PC-3 (cell line): ENCODE measurements at regions of chr14 and their contacts with region 1.

Region 1: GRCh38 chr14:89303457-89304435 is 113.3 kb downstream of the FOXN3 start:
- DNase-seq: peak; percentile 64
- ATAC-seq: peak; percentile 50
- H3K4me3 ChIP-seq: peak overlapping the region; percentile 44
- H3K27ac ChIP-seq: peak overlapping the region; percentile 93
- H3K4me1 ChIP-seq: peaks cover 38% of the 10 kb centered on the region
- H3K27me3 ChIP-seq: no peaks in the 10 kb centered on the region
- CTCF ChIP-seq: no peak

Region 2: DNA sequence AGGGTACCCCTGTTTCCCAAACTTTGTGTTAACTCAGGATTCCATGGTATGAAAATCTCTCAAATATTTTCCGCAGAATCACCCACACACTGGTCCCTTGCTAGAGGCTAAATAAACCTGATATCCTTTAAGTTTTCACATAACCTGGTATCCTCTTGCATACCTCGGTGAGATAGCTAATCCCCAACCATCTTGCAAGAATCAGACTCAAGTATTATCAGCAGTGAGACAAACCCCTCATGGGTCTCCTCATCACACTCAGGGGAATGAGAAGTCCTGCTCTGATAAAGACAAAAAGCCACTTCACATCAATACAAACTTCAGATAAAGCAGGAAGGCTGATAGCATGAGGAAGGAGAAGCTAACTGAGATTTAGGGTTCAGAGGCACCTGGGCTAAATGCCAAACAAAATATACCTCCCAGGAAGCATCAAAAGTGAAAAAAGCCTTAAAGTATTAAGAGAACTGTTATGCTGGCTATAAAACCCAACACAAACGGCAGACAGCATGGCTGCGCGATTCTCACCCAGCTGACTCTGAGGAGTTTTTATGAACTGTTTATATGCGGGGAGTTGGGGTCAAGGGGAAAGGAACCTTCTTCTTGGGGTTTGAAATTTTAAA is 16.7 kb after region 1 on chr14:
- CTCF ChIA-PET with region 1: no interaction called
- POLR2A ChIA-PET with region 1: no interaction called
- intact Hi-C with region 1: loop called (anchors 2 kb)
- DNase-seq: no peak
- ATAC-seq: no peak
- H3K4me3 ChIP-seq: no peak overlapping the region
- H3K27ac ChIP-seq: peak overlapping the region; percentile 55
- H3K4me1 ChIP-seq: peaks cover 15% of the 10 kb centered on the region; the same call in 1 of the 2 replicates
- H3K27me3 ChIP-seq: no peaks in the 10 kb centered on the region
- CTCF ChIP-seq: no peak

Region 3: DNA sequence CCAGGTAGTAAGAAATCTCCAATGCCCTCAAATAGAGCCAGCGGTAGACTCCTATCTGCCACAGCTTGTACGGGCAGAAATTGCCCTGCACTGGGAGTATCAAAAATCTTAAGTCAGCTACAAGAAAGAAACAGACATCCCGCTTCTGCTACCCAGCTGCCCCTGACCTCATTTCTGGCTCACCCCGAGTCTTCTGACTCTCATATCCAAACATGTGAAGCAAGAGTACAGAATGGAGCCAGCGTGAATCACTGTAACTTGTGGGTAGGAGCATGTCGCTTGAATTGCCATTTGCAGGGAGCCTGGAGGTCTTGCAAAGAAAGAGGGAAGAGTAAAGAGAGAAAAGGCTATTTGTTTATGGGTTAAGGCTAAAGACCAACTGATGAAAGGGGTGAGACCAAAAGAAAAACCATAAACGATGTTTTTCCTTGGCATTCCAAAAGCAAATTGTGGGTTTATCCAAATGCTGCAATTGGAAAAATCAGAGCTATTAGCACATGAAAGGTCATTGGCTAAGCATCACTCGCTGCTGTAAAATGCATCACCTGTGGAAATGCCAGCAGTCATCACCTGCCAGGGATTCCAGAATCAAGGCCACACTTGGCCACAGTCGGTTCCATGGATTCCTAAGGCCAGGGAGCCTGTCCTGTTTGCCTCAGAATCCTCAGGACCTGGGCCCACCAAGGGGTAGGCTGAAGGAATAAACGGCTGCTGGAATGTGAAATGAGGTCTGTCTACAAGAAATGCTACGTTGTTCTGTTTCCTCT is 26.7 kb after region 1 on chr14:
- CTCF ChIA-PET with region 1: no interaction called
- POLR2A ChIA-PET with region 1: interaction called, 10 read pairs
- intact Hi-C with region 1: loop called (anchors 2 kb)
- DNase-seq: no peak
- ATAC-seq: no peak
- H3K4me3 ChIP-seq: no peak overlapping the region
- H3K27ac ChIP-seq: no peak overlapping the region
- H3K4me1 ChIP-seq: peaks cover 22% of the 10 kb centered on the region
- H3K27me3 ChIP-seq: no peaks in the 10 kb centered on the region
- CTCF ChIP-seq: no peak

Region 4: DNA sequence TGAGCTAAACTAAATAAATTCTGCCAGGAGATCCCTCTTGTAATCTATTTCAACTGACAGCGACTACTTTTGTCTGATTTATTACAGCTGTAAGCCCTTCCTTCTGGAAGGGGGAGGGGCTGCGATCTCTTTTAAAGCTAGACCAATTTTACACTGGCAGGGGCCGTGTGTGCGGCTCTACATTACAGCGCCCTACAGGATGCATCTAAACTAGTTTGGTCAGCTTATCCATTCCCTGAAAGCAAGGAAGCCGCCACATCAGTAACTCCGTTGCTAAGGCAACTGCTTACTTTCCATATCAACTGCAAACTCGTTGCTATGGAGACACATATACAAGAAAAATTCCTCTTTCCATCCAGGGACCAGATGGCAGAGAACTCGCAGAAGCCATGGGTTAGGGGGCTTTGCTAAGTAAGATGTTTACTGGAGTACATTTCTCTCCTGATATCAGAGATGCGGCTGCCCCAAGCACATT is 95.9 kb after region 1 on chr14:
- CTCF ChIA-PET with region 1: interaction called, 14 read pairs
- POLR2A ChIA-PET with region 1: no interaction called
- intact Hi-C with region 1: no loop called
- DNase-seq: no peak
- ATAC-seq: no peak
- H3K4me3 ChIP-seq: no peak overlapping the region
- H3K27ac ChIP-seq: no peak overlapping the region
- H3K4me1 ChIP-seq: no peaks in the 10 kb centered on the region
- H3K27me3 ChIP-seq: no peaks in the 10 kb centered on the region
- CTCF ChIP-seq: no peak